ENCODE measurements at regions of chr18 and their contacts with region 1.

Region 1: GRCh38 chr18:22999212-22999611 is 66.1 kb downstream of the RBBP8 start:
- DNase-seq: no peak
- ATAC-seq: no peak
- H3K4me3 ChIP-seq: no peak overlapping the region
- H3K27ac ChIP-seq: no peak overlapping the region
- H3K4me1 ChIP-seq: no peaks in the 10 kb centered on the region
- H3K27me3 ChIP-seq: no peaks in the 10 kb centered on the region
- CTCF ChIP-seq: no peak
- EP300 ChIP-seq: no peak
- POLR2A ChIP-seq: no peak
- RAD21 ChIP-seq: no peak

Region 2: DNA sequence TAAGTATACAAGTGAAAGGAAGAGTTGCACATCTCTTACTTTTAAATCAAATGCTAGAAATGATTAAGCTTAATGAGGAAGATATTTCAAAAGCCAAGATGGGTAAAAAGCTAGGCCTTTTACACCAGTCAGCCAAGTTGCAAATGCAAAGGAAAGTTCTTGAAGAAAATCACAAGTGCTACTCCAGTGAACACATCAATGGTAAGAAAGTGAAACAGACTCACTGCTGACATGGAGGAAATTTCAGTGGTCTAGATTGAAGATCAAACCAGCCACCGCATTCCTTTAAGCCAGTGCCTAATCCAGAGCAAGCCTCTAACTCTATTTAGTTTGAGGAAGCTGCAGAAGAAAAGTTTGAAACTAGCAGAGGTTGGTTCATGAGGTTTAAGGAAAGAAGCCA is 13.0 kb after region 1 on chr18:
- CTCF ChIA-PET with region 1: interaction called, 3 read pairs
- POLR2A ChIA-PET with region 1: interaction called, 10 read pairs
- RAD21 ChIA-PET with region 1: interaction called, 4 read pairs
- SMC1A ChIA-PET with region 1: no interaction called
- in situ Hi-C with region 1: no loop called
- intact Hi-C with region 1: no loop called
- DNase-seq: no peak
- ATAC-seq: no peak
- H3K4me3 ChIP-seq: no peak overlapping the region
- H3K27ac ChIP-seq: no peak overlapping the region
- H3K4me1 ChIP-seq: no peaks in the 10 kb centered on the region
- H3K27me3 ChIP-seq: no peaks in the 10 kb centered on the region
- CTCF ChIP-seq: no peak
- EP300 ChIP-seq: no peak
- POLR2A ChIP-seq: no peak
- RAD21 ChIP-seq: no peak

Measured in GM12878 (cell line).